ENCODE measurements at regions of chr14 and their contacts with region 1.

Region 1: GRCh38 chr14:84969501-84969900 is 560.4 kb upstream of the FLRT2 start:
- DNase-seq: no peak
- H3K4me3 ChIP-seq: no peak overlapping the region
- H3K27ac ChIP-seq: no peak overlapping the region
- H3K4me1 ChIP-seq: peaks cover 17% of the 10 kb centered on the region
- H3K27me3 ChIP-seq: no peaks in the 10 kb centered on the region
- CTCF ChIP-seq: no peak
- POLR2A ChIP-seq: no peak

Region 2: DNA sequence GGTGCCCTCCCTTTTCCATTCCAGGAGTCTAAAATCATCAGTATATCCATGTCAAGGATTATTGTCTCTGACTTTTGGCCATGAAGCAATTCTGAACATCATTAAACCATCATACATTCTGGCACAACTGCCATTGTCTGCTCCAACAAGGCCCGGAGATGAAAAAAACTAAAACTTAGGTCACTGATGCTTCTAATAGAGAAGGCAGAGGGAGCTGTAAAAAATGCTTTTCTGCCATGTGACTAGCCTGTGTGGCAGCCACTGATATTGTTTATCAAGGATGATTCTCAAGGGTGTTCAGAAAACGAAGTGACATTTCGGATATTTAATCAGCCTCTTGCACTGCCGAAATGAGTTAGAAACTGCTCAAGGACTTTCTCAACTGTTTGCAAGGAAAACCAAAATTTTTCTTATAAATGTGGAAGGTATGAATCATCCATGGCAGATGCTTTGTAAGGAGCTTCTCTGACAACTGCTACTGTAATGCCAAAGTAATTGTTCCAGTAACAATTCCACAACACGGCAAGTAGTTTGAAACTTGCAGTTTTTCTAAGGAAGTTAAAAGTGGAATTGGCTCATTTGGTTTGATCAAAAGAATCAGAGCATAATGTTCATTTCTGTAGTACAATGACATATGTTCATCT is 516.1 kb before region 1 on chr14:
- CTCF ChIA-PET with region 1: no interaction called
- POLR2A ChIA-PET with region 1: no interaction called
- dilution Hi-C with region 1: no loop called
- intact Hi-C with region 1: no loop called
- DNase-seq: no peak
- H3K4me3 ChIP-seq: no peak overlapping the region
- H3K27ac ChIP-seq: no peak overlapping the region
- H3K4me1 ChIP-seq: no peaks in the 10 kb centered on the region
- H3K27me3 ChIP-seq: no peaks in the 10 kb centered on the region
- CTCF ChIP-seq: no peak
- POLR2A ChIP-seq: no peak

Region 3: DNA sequence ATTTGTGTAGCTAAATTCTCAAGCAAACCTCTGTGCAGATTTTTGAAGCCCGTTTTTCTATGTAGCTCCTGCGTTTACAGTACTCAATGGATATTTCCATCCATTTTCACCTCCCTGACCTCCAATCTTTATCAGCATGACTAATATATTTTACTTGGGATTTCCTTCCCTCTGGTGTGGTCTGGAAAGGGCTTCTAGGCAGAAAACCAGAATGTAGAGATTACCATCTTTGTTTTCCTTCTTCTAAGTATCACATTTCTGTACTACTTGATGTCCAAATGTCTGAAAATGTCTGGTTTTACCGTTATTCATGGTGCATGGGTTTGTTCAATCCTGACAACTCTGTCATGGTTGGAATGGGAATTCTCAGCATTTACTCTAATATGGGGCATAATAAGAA is 347.1 kb before region 1 on chr14:
- CTCF ChIA-PET with region 1: no interaction called
- POLR2A ChIA-PET with region 1: no interaction called
- dilution Hi-C with region 1: no loop called
- intact Hi-C with region 1: loop called (anchors 5 kb)
- DNase-seq: peak; percentile 94
- H3K4me3 ChIP-seq: no peak overlapping the region
- H3K27ac ChIP-seq: no peak overlapping the region
- H3K4me1 ChIP-seq: peaks cover 16% of the 10 kb centered on the region
- H3K27me3 ChIP-seq: no peaks in the 10 kb centered on the region
- CTCF ChIP-seq: no peak
- POLR2A ChIP-seq: no peak

Region 4: DNA sequence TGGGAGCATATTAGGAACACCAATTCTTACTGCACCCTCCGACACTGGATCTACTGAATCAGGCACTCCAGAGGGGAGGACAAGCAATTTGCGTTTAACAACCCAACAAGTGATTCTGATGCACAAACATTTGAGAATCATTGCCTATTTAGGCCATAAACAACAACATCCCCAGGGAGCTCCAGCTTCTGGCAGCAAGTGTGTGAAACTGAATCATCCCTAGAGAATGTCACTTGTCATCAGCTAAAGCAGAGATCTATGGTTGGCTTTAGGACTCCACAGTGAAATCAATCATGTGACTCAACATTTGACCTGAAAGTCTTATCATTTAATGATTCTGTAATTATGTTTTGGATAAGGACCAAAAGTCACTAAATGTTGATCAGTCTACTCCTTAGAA is 55.4 kb after region 1 on chr14:
- CTCF ChIA-PET with region 1: no interaction called
- POLR2A ChIA-PET with region 1: no interaction called
- dilution Hi-C with region 1: no loop called
- intact Hi-C with region 1: no loop called
- DNase-seq: no peak
- H3K4me3 ChIP-seq: no peak overlapping the region
- H3K27ac ChIP-seq: no peak overlapping the region
- H3K4me1 ChIP-seq: no peaks in the 10 kb centered on the region
- H3K27me3 ChIP-seq: no peaks in the 10 kb centered on the region
- CTCF ChIP-seq: no peak
- POLR2A ChIP-seq: no peak

Region 5: DNA sequence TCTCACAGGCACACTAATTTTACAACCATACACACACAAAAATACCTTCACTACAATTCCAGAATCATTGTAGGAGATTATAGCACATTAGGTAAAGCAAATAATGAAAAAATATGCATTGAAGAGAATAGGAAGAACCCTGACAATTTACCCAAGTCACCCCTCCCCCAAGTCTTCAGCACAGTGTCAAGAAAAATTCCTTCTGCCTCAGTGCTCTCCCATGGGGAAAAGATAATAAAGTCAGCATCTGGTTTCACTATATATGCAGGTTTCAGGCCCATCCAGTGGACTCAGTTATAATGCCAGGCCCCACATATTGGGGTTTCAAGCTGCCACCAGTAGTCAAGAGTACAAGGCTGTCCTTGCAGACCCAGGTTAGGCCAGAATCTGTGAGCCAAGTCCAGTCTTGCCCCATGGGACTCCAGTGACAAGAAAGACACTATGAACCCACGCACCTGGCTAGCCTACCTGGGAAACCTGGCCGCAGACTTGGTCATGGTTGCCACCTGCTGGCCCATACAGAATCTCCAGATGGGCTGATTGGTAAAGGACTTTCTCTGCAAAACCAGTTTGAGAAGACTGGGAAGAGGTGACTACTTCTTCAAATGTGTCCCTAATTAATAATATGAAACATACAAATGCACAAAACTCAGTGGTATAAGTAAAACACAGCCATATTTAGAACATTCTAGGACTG is 161.9 kb after region 1 on chr14:
- CTCF ChIA-PET with region 1: no interaction called
- POLR2A ChIA-PET with region 1: no interaction called
- dilution Hi-C with region 1: no loop called
- intact Hi-C with region 1: no loop called
- DNase-seq: no peak
- H3K4me3 ChIP-seq: no peak overlapping the region
- H3K27ac ChIP-seq: no peak overlapping the region
- H3K4me1 ChIP-seq: no peaks in the 10 kb centered on the region
- H3K27me3 ChIP-seq: no peaks in the 10 kb centered on the region
- CTCF ChIP-seq: no peak
- POLR2A ChIP-seq: no peak